ENCODE measurements at regions of chr11 and their contacts with region 1.

Region 1: DNA sequence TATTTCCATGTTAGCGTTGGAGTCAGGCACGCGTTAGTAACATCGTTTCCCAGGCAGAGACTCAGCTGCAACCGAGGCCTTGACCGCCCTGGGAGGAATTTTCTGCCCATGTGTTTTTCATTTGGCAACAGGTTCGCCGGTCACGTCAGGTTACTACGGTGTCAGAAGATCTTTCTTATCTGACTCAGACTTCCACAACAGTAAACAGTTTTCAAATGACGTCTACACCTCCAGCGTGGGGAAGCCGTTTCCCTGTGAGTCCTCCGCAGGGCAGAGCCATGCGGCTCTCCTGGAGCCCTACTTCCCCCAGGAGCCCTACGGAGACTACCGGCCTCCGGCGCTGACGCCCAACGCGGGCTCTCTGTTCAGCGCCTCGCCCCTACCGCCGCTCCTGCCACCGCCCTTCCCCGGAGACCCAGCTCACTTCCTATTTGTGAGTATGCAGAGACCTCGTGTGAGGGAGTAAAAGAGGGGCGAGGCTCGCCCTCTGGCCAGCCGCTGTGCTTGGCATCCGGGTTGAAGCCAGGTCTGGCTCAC is 14.3 kb upstream of the POU2AF3 start:
- DNase-seq: no peak
- H3K4me3 ChIP-seq: no peak overlapping the region
- CTCF ChIP-seq: no peak
- POLR2A ChIP-seq: no peak

Region 2: DNA sequence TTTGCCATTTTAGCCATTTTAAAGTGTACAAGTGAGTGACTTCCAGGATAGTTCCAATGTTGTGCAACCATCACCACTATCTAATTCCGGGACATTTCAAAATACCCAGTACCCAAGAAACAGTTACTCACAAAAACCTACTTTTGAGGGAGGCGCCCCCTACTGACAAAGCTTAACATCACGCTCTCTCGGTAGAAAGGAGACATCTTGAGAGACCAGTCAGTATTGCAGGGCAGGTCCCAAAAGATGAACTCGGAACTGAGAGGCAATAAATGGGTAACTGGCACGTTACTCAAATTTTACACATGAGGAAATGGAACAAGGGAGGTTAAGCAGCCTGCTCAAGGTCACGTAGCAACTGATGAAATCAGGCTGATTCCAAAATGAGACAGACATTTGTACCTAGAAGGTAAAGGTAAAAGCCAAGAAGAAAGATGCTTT is 145.1 kb after region 1 on chr11:
- intact Hi-C with region 1: loop called (anchors 5 kb)
- DNase-seq: peak; percentile 76 to 92
- H3K4me3 ChIP-seq: no peak overlapping the region
- CTCF ChIP-seq: no peak
- POLR2A ChIP-seq: no peak

Region 3: DNA sequence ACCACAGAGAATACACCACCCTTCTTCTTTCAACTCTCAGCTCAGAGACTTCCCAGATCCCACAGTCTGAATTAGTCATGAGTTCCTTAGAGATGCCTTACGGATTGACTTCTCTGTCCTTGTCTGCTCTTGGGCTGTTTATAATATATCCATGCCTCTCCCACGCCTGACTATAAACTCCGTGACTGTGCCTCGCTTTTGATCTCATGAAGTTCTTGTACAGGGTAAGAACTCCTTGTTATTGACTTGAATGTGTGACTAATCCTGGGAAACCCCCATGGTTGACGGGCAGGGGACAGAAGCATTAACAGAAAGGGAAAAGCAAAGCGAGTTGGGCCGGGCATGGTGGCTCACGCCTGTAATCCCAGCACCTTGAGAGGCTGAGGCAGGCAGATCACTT is 157.4 kb after region 1 on chr11:
- intact Hi-C with region 1: loop called (anchors 5 kb)
- DNase-seq: no peak
- H3K4me3 ChIP-seq: no peak overlapping the region
- CTCF ChIP-seq: no peak
- POLR2A ChIP-seq: no peak